Activated B cell treated with CpG ODN at 0.5 μM for 24 hours (primary cell): ENCODE measurements at regions of chr19 and their contacts with region 1.

Region 1: GRCh38 chr19:48333467-48334384 is 8.4 kb downstream of the EMP3 start:
- DNase-seq: peak; percentile 90
- ATAC-seq: peak; percentile 66
- H3K4me3 Mint-ChIP-seq: peak overlapping the region; percentile 95
- H3K27ac Mint-ChIP-seq: peak overlapping the region; percentile 93
- H3K4me1 Mint-ChIP-seq: peaks cover 54% of the 10 kb centered on the region
- H3K27me3 Mint-ChIP-seq: no peaks in the 10 kb centered on the region
- CTCF ChIP-seq: no peak

Region 2: DNA sequence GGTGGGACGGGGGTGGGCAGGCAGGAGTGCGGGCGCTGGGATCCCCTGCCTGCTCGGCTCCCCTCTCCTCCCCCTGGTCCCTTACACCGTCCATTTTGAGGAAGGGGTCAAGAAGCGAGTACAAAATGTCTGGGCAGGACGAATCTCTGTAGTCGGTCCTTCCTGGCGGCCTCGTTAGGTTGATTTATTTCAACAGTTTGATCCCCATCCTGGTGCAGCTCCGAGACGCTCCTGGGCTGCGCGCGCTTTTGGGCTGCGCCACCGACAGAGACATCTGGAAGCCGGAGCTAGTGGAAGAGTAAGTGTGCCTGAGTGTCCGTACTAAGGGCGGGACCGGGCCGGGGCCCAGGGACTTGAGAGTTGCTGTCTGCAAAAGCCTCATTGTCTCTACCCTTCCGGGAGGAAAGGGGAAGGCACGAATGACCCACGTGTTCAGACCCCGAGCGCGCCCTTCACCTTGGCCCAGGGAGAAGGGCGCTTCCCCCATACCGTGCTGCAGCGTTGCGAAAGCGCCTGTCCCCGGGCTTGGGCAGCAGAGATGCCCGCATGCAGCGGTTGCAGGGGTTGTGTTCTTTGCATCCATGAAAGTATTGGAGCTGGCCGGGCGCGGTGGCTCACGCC is 62.1 kb before region 1 on chr19:
- CTCF ChIA-PET with region 1: interaction called, 37 read pairs
- POLR2A ChIA-PET with region 1: interaction called, 22 read pairs
- intact Hi-C with region 1: loop called (anchors 1 kb)
- DNase-seq: peak; percentile 37
- ATAC-seq: peak; percentile 75
- H3K4me3 Mint-ChIP-seq: peak overlapping the region; percentile 95
- H3K27ac Mint-ChIP-seq: peak overlapping the region; percentile 80
- H3K4me1 Mint-ChIP-seq: peaks cover 14% of the 10 kb centered on the region
- H3K27me3 Mint-ChIP-seq: no peaks in the 10 kb centered on the region
- CTCF ChIP-seq: no peak

Region 3: DNA sequence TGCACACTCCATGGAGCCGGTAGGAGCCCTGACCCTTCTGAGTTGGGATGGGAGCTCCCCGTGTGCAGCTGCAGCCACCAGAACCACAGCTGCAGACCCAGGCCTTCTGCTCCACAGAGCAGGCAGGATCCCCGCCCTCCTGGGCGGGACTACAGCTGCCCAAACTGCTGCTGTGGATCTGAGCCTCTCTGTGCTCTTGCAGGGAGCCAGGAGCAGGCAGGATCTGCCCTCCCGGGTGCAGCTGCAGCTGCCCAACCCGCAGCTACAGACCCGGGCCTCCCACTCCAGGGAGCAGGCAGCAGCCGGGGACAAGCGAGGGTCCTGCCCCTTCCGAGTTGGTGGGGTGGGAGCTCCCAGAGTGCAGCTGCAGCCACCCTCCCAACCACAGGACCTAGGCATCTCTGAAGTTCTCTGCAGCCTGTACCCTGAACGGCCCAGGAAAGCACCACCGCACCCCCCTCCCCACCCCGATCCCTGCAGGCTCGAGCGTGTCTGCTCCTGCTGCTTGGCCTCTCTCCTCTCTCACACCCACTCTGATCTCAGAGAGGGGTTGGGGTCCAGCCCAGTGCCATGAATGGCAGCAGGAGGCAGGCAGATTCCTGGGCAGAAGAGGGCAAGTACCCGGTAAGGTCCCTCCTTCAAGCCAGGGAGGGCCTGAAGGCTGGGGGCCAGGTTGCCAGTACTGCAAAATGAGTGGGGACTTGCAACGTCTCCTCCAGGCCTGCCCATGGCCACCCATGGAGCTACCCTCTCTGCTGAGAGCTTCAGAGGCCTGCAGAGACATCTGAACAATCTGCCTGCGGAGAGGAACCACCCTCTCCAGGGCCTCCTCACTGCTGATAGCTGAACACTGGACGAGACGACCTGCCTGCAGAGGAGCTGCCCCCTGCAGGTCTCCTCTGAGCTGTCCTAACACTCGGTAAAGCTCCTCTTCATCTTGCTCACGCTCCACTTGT is 24.8 kb before region 1 on chr19:
- CTCF ChIA-PET with region 1: interaction called, 215 read pairs
- POLR2A ChIA-PET with region 1: interaction called, 11 read pairs
- intact Hi-C with region 1: no loop called
- DNase-seq: no peak
- ATAC-seq: no peak
- H3K4me3 Mint-ChIP-seq: no peak overlapping the region
- H3K27ac Mint-ChIP-seq: no peak overlapping the region
- H3K4me1 Mint-ChIP-seq: no peaks in the 10 kb centered on the region
- H3K27me3 Mint-ChIP-seq: peaks cover 4% of the 10 kb centered on the region
- CTCF ChIP-seq: no peak

Region 4: DNA sequence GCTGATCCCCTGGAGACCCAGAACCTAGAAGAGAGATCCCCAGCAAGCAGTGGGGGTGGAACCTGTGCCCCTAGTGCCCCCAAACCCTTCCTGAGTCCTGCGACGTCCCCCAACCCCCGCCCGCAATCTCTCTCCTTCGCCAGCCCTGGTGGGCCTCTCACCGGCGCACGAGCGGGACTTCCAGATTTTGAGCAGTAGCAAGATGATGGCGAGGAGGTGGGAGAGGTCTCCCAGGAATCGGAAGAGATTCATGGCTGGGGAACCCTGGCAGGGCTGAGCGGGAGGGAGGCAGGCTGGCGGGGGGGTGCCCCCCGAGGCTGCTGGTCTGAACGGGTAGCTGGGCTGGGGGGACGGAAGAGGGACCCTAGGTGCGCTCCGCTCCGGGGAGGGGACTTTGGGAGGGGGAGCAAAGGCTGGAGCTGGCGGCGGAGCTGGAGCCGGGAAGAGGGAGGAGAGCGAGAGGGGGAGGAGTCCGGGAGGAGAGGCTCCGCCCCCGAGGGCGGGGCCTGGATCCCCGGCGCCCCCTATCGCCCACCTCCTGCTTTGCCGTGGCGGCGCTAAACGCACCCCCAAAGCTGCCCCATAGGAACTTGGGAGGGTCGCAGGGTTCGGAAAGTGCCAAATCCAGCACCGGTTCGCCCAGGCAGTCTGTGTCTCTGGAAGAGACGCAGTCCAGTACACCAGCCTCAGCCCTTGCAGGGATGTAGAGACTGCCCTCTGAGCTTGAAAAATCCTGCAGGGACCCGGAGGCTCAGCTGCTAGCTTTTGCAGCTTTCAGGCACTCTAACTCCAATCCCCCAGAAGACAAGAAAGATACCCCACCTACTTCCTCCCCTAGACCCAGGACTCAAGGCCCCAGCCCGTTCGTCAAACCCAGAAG is 57.6 kb after region 1 on chr19 and contains the start of gene KDELR1:
- CTCF ChIA-PET with region 1: interaction called, 5 read pairs
- POLR2A ChIA-PET with region 1: interaction called, 11 read pairs
- intact Hi-C with region 1: loop called (anchors 5 kb)
- DNase-seq: peak; percentile 83
- ATAC-seq: peak; percentile 84
- H3K4me3 Mint-ChIP-seq: peak within 1 kb of the TSS; percentile 96
- H3K27ac Mint-ChIP-seq: peak within 1 kb of the TSS; percentile 88
- H3K4me1 Mint-ChIP-seq: peaks cover 35% of the 10 kb centered on the region
- H3K27me3 Mint-ChIP-seq: peaks cover 19% of the 10 kb centered on the region
- CTCF ChIP-seq: peak; percentile 51
- total RNA-seq, gene KDELR1: 50.8 and 51.9 TPM in 2 replicates

Region 5: DNA sequence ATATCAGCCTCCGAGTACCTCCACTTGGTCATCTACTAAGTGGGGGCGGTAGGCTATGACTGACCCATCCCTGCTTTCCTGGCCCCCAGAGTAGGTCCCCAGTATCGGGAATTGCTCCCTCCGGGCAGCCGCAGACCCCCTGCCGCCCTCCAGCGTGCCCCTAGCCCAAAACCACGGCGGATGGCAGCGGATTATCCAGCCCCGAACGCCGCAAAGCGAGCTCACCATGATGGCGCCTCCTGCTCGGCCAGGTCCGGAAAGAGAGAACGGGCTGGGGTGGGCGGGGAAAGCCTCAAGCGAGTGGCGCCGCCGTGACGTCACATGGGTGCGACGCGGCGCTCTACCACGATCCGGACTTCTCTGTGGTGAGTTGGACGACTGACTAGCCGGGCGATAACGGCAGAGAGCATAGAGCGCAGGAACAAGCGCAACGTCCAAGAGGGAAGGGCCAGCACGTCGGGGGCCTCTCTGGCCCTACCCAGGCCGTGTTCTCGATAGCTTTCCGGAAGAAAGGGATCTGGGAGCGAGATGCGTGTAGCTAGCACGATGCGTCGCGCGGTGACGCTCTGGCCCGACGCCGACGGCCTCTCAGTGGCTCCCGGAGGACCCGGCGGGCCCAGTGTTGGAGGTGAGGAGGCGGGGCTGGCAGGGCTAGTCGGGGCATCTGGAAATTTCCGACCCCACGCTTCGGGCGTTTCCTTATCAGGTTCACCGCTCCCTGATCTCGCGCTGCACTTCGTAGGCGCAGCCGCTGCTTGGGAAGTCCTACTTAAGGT is 285.4 kb after region 1 on chr19 and contains the starts of genes RPL18 and SPHK2:
- CTCF ChIA-PET with region 1: interaction called, 3 read pairs
- POLR2A ChIA-PET with region 1: interaction called, 5 read pairs
- intact Hi-C with region 1: loop called (anchors 2 kb)
- DNase-seq: peak; percentile 93
- ATAC-seq: peak; percentile 81
- H3K4me3 Mint-ChIP-seq: peak within 1 kb of the TSS; percentile 98
- H3K27ac Mint-ChIP-seq: peak within 1 kb of the TSS; percentile 97
- H3K4me1 Mint-ChIP-seq: peaks cover 56% of the 10 kb centered on the region
- H3K27me3 Mint-ChIP-seq: no peaks in the 10 kb centered on the region
- CTCF ChIP-seq: no peak
- total RNA-seq, gene RPL18: 2,427 and 2,762 TPM in 2 replicates
- total RNA-seq, gene SPHK2: 38.2 and 48.5 TPM in 2 replicates

Region 6: DNA sequence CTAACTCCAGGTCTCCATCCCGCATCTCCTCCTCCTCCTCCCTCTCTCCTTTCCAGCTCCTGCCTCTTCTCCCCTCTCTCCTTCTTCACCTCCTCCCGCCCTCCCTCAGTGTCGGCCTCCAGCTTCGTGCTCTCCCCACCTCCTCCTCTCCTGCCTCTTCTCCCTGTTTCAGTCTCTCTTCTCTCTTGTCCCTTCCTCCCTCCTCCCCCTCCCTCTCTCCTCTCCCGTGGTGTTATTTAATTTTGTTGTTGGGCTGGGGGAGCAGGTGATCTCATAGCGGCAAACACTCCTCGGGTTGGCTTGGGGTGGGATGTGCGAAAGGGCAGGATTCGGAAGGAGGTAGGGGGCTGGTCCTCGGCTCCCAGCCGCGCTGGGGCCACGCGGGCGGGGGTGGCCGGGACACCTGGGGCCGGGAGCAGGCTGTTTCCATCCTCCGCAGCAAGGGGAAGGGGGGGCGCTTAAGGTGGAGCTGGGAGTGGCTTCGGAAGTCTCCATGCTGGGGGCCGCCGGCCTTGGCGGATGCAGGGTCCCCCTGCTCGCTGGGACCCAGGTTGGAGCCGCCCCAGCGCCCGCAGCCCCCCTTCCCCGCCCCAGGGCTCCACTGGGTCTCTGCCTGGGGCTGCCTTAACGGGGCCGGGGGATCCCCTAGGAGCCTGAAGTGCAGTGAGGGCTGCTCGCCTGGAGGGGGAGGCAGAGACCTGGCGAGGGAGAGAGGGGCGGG is 312.4 kb after region 1 on chr19 and contains the start of gene CA11:
- CTCF ChIA-PET with region 1: no interaction called
- POLR2A ChIA-PET with region 1: no interaction called
- intact Hi-C with region 1: no loop called
- DNase-seq: peak; percentile 91
- ATAC-seq: peak; percentile 90
- H3K4me3 Mint-ChIP-seq: peak within 1 kb of the TSS; percentile 93
- H3K27ac Mint-ChIP-seq: peak within 1 kb of the TSS; percentile 92
- H3K4me1 Mint-ChIP-seq: peaks cover 50% of the 10 kb centered on the region
- H3K27me3 Mint-ChIP-seq: no peaks in the 10 kb centered on the region
- CTCF ChIP-seq: no peak
- total RNA-seq, gene CA11: 9.5 and 10.3 TPM in 2 replicates